Activated T-helper 1 cell treated with anti-CD3 and anti-CD28 coated beads, Interleukin-12 subunit alpha, Interleukin-12 subunit beta, Interleukin-2, Interleukin-4 antibody, amounts not matched to agents 30 ng/mL and 10 ng/mL and 1 ng/mL, durations not matched to agents 14 hours and 24 hours and 36 hours (primary cell): ENCODE measurements at regions of chr6 and their contacts with region 1.

Region 1: GRCh38 chr6:127420556-127420955 is 38.6 kb downstream of the KIAA0408 start:
- DNase-seq: peak; percentile 73
- H3K4me3 Mint-ChIP-seq: peak overlapping the region; percentile 3
- H3K27ac Mint-ChIP-seq: peak overlapping the region; percentile 47
- H3K4me1 Mint-ChIP-seq: peaks cover 17% of the 10 kb centered on the region
- H3K27me3 Mint-ChIP-seq: no peaks in the 10 kb centered on the region

Region 2: DNA sequence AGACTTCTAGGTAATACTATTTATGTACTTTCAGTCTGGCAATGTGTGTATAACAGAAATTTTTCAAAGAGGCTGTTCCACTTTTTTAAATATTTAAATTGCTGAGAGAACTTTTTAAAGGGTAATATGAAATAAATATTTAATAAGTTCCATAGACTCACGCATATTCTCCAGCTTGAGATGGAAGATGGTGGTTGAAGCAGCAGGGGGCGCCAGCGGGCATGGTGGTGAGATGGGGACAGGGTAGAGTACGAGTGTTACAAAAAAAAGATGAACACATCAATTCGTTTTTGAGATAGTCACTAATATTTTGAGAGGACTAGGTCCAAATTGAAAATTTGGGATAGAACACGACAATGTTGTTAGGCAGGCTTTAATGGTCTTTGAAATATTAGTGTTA is 233.7 kb before region 1 on chr6:
- intact Hi-C with region 1: loop called (anchors 2 kb)
- DNase-seq: peak; percentile 31
- H3K4me3 Mint-ChIP-seq: no peak overlapping the region
- H3K27ac Mint-ChIP-seq: no peak overlapping the region
- H3K4me1 Mint-ChIP-seq: no peaks in the 10 kb centered on the region
- H3K27me3 Mint-ChIP-seq: peaks cover 5% of the 10 kb centered on the region

Region 3: DNA sequence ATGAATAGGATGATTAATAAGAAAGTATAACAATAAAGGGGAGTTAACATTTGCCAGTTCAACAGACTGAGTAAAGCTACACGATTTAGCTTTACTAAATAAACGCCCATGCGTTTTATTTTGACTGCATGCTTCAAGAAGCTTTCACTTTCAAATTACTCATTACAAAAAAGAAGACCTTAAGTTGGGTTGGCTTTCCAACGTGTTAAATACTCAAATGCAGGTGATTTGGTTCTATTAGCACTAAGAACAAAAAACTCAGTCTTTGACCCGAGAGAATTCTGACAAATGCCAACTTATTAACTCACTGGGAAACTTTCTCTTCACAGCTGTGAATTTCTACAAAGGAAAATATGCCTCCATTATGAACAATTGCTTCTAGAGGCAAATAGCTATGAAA is 129.1 kb before region 1 on chr6:
- intact Hi-C with region 1: loop called (anchors 1 kb)
- DNase-seq: no peak
- H3K4me3 Mint-ChIP-seq: peak overlapping the region; percentile 8
- H3K27ac Mint-ChIP-seq: peak overlapping the region; percentile 77
- H3K4me1 Mint-ChIP-seq: peaks cover 32% of the 10 kb centered on the region
- H3K27me3 Mint-ChIP-seq: no peaks in the 10 kb centered on the region

Region 4: DNA sequence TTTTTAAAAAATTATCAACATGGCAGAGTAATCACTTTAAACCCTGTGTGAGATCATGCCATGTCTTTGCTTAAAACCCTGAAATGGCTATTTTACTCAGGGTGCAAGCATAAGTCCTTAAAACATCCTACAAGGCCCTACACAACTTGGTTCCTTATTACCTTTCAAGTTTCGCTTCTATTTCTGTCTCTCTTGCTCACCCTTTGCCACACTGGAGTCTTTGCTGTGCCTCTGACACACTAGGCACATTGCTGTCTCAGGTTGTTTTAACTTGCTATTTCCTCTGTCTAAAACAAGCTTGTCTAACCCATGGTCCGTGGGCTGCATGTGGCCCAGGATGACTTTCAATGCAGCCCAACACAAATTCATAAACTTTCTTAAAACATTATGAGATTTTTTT is 16.9 kb before region 1 on chr6:
- intact Hi-C with region 1: loop called (anchors 1 kb)
- DNase-seq: no peak
- H3K4me3 Mint-ChIP-seq: no peak overlapping the region
- H3K27ac Mint-ChIP-seq: peak overlapping the region; percentile 67
- H3K4me1 Mint-ChIP-seq: peaks cover 18% of the 10 kb centered on the region
- H3K27me3 Mint-ChIP-seq: no peaks in the 10 kb centered on the region

Region 5: GRCh38 chr6:127464881-127465459 is 44.4 kb after region 1 on chr6:
- intact Hi-C with region 1: loop called (anchors 5 kb)
- DNase-seq: peak; percentile 36
- H3K4me3 Mint-ChIP-seq: no peak overlapping the region
- H3K27ac Mint-ChIP-seq: no peak overlapping the region
- H3K4me1 Mint-ChIP-seq: peaks cover 9% of the 10 kb centered on the region
- H3K27me3 Mint-ChIP-seq: peaks cover under 1% of the 10 kb centered on the region

Region 6: GRCh38 chr6:127516666-127517273 is 96.2 kb after region 1 on chr6:
- intact Hi-C with region 1: loop called (anchors 1 kb)
- DNase-seq: peak; percentile 48
- H3K4me3 Mint-ChIP-seq: peak overlapping the region; percentile 90
- H3K27ac Mint-ChIP-seq: peak overlapping the region; percentile 70
- H3K4me1 Mint-ChIP-seq: peaks cover 54% of the 10 kb centered on the region
- H3K27me3 Mint-ChIP-seq: peaks cover 14% of the 10 kb centered on the region

Region 7: DNA sequence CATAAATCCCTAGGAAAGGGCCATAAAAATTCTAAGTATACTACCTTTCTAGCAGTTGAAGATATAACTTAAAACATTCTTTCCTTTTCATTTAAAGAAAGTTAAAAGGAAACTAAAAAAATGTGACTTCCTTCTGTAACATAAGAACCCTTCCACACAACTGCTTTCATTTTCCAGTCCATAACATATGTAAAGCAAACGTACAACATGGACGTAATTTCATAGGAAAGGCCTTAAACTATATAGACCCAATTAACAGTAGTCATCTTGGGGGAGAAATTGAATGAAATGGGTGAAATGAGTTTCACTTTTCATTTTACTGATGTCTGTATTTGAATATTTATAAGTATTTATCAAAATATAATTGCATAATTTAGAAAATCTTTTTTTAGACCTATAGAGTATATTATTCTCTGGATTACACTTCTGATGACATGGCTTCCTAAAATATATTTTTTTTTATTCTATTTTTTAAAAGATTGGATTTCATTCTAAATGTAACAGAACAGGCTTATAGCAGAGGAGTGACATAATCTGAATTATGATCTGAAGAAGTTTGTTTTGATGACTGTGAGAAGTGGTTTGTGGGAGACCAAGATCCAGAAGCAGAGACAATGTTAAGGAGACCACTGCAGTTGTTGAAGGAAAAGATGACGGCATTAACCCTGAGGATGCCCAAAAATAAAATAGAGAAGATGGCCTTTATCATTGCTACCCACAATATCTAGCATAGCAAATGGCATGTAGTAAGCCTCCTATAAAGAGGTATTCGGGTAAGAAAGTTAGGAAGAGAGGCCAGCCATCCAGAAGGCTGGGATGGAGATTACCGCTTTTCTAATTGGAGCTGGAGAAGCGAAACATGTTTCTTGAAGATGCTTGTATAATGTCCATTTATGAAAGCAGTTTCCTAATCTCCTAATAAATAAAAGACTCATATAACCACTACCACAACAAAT is 839.5 kb after region 1 on chr6:
- intact Hi-C with region 1: loop called (anchors 1 kb)
- DNase-seq: no peak
- H3K4me3 Mint-ChIP-seq: peak overlapping the region; percentile 25
- H3K27ac Mint-ChIP-seq: no peak overlapping the region
- H3K4me1 Mint-ChIP-seq: peaks cover 30% of the 10 kb centered on the region
- H3K27me3 Mint-ChIP-seq: no peaks in the 10 kb centered on the region